Activated T-helper 1 cell treated with anti-CD3 and anti-CD28 coated beads, Interleukin-12 subunit alpha, Interleukin-12 subunit beta, Interleukin-2, Interleukin-4 antibody, amounts not matched to agents 30 ng/mL and 10 ng/mL and 1 ng/mL, durations not matched to agents 14 hours and 24 hours and 36 hours (primary cell): ENCODE measurements at regions of chr16 and their contacts with region 1.

Region 1: GRCh38 chr16:11667824-11668622 is at the start of gene SNN:
- DNase-seq: peak; percentile 85
- H3K4me3 Mint-ChIP-seq: peak within 1 kb of the TSS; percentile 80
- H3K27ac Mint-ChIP-seq: no peak within 1 kb of the TSS
- H3K4me1 Mint-ChIP-seq: peaks cover 66% of the 10 kb centered on the region
- H3K27me3 Mint-ChIP-seq: no peaks in the 10 kb centered on the region
- total RNA-seq, gene SNN: 7.3 and 7.9 TPM in 2 replicates

Region 2: GRCh38 chr16:11851294-11852091 is 183.5 kb after region 1 on chr16 and contains the start of gene RSL1D1:
- intact Hi-C with region 1: loop called (anchors 2 kb)
- DNase-seq: peak; percentile 95
- H3K4me3 Mint-ChIP-seq: peak within 1 kb of the TSS; percentile 99
- H3K27ac Mint-ChIP-seq: peak within 1 kb of the TSS; percentile 97
- H3K4me1 Mint-ChIP-seq: peaks cover 44% of the 10 kb centered on the region
- H3K27me3 Mint-ChIP-seq: no peaks in the 10 kb centered on the region
- total RNA-seq, gene RSL1D1: 345 and 369 TPM in 2 replicates